Activated CD4-positive, alpha-beta T cell treated with anti-CD3 and anti-CD28 coated beads for 36 hours (primary cell): ENCODE measurements at regions of chr2 and their contacts with region 1.

Region 1: GRCh38 chr2:194155431-194155830 is 1501.6 kb upstream of the SLC39A10 start:
- DNase-seq: no peak
- ATAC-seq: no peak
- H3K4me3 Mint-ChIP-seq: no peak overlapping the region
- H3K27ac Mint-ChIP-seq: no peak overlapping the region
- H3K4me1 Mint-ChIP-seq: no peaks in the 10 kb centered on the region
- H3K27me3 Mint-ChIP-seq: no peaks in the 10 kb centered on the region

Region 2: DNA sequence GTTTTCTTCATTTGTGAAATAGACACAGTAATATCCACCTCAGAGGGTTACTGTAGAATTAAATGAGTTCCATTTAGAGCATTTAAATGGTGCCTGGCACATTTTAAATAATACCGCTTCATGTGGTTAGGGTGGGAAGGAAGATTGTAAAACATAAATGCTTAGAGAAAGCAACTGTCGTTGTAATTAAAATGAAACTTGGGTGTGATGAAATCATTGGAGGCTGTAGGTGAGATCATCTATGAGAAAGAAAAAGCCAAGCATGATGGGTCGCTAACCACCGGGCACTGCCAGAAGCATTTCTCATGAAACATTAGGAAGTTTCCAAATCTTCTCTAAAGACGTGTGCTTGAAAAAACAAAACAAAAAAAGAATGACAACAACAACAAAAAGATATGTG is 1493.4 kb after region 1 on chr2:
- CTCF ChIA-PET with region 1: no interaction called
- POLR2A ChIA-PET with region 1: interaction called, 10 read pairs
- intact Hi-C with region 1: no loop called
- DNase-seq: peak; percentile 23
- ATAC-seq: peak; percentile 64
- H3K4me3 Mint-ChIP-seq: no peak overlapping the region
- H3K27ac Mint-ChIP-seq: peak overlapping the region; percentile 61
- H3K4me1 Mint-ChIP-seq: peaks cover 9% of the 10 kb centered on the region
- H3K27me3 Mint-ChIP-seq: no peaks in the 10 kb centered on the region